ENCODE measurements at regions of chrX and their contacts with region 1.

Region 1: DNA sequence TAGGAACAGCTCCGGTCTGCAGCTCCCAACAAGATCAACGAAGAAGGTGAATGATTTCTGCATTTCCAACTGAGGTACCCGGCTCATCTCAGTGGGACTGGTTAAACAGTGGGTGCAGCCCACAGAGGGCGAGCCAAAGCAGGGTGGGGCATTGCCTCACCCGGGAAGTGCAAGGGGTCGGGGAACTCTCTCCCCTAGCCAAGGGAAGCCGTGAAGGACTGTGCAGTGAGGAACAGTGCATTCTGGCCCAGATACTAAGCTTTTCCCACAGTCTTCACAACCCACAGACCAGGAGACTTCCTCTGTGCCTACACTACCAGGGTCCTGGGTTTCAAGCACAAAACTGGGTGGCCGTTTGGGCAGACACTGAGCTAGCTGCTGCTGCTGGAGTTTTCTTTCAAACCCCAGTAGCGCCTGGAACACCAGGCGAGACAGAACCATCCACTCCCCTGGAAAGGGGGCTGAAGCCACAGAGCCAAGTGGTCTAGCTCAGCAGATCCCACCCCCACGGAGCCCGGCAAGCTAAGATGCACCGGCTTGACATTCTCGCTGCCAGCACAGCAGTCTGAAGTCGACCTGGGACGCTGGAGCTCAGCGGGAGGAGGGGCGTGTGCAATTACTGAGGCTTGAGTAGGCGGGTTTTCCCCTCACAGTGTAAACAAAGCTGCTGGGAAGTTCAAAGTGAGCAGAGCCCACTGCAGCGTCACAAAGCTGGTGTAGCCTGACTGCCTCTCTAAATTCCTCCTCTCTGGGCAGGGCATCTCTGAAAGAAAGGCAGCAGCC is 84.6 kb downstream of the THOC2 start:
- DNase-seq: peak in 7 of 9 donors; percentile 5 to 44 (median 21)
- ATAC-seq: peak; percentile 47
- H3K4me3 ChIP-seq: no peak overlapping the region
- H3K4me3 Mint-ChIP-seq: peak overlapping the region in 1 of 10 donors; percentile 24
- H3K27ac ChIP-seq: no peak overlapping the region
- H3K27ac Mint-ChIP-seq: peak overlapping the region in 4 of 9 donors; percentile 17 to 80 (median 46)
- H3K4me1 ChIP-seq: no peaks in the 10 kb centered on the region
- H3K4me1 Mint-ChIP-seq: peaks cover 14 to 51% (median 41%) of the 10 kb centered on the region in 7 donors
- H3K27me3 ChIP-seq: no peaks in the 10 kb centered on the region
- H3K27me3 Mint-ChIP-seq: no peaks in the 10 kb centered on the region

Region 2: GRCh38 chrX:123464709-123465108 is 183.5 kb before region 1 on chrX:
- CTCF ChIA-PET with region 1: no interaction called
- POLR2A ChIA-PET with region 1: no interaction called
- intact Hi-C with region 1: no loop called
- DNase-seq: no peak
- ATAC-seq: no peak
- H3K4me3 ChIP-seq: no peak overlapping the region
- H3K4me3 Mint-ChIP-seq: no peak overlapping the region
- H3K27ac ChIP-seq: no peak overlapping the region
- H3K27ac Mint-ChIP-seq: no peak overlapping the region
- H3K4me1 ChIP-seq: no peaks in the 10 kb centered on the region
- H3K4me1 Mint-ChIP-seq: no peaks in the 10 kb centered on the region
- H3K27me3 ChIP-seq: no peaks in the 10 kb centered on the region
- H3K27me3 Mint-ChIP-seq: peaks cover 0 to 11% (median 0%) of the 10 kb centered on the region in 5 donors

Region 3: GRCh38 chrX:123626962-123627361 is 21.3 kb before region 1 on chrX:
- CTCF ChIA-PET with region 1: no interaction called
- POLR2A ChIA-PET with region 1: no interaction called
- intact Hi-C with region 1: loop called in 1 of 2 experiments (anchors 1 kb)
- DNase-seq: no peak
- ATAC-seq: no peak
- H3K4me3 ChIP-seq: no peak overlapping the region
- H3K4me3 Mint-ChIP-seq: no peak overlapping the region
- H3K27ac ChIP-seq: no peak overlapping the region
- H3K27ac Mint-ChIP-seq: peak overlapping the region in 4 of 9 donors; percentile 17 to 48 (median 34)
- H3K4me1 ChIP-seq: no peaks in the 10 kb centered on the region
- H3K4me1 Mint-ChIP-seq: peaks cover 0 to 10% (median 0%) of the 10 kb centered on the region in 7 donors
- H3K27me3 ChIP-seq: no peaks in the 10 kb centered on the region
- H3K27me3 Mint-ChIP-seq: no peaks in the 10 kb centered on the region

Region 4: GRCh38 chrX:123960042-123960611 is 311.9 kb after region 1 on chrX:
- CTCF ChIA-PET with region 1: no interaction called
- POLR2A ChIA-PET with region 1: no interaction called
- intact Hi-C with region 1: no loop called
- DNase-seq: peak; percentile 75 to 91 (median 87)
- ATAC-seq: peak; percentile 82
- H3K4me3 ChIP-seq: peak overlapping the region; percentile 87
- H3K4me3 Mint-ChIP-seq: peak overlapping the region; percentile 88 to 99 (median 97)
- H3K27ac ChIP-seq: peak overlapping the region; percentile 99
- H3K27ac Mint-ChIP-seq: peak overlapping the region; percentile 97 to 100 (median 98)
- H3K4me1 ChIP-seq: peaks cover under 1 to 2% of the 10 kb centered on the region in 2 donors
- H3K4me1 Mint-ChIP-seq: peaks cover 6 to 28% (median 17%) of the 10 kb centered on the region in 7 donors
- H3K27me3 ChIP-seq: no peaks in the 10 kb centered on the region
- H3K27me3 Mint-ChIP-seq: peaks cover 0 to 4% (median 0%) of the 10 kb centered on the region in 5 donors